AG04450 (cell line): ENCODE measurements at regions of chr1 and their contacts with region 1.

Region 1: DNA sequence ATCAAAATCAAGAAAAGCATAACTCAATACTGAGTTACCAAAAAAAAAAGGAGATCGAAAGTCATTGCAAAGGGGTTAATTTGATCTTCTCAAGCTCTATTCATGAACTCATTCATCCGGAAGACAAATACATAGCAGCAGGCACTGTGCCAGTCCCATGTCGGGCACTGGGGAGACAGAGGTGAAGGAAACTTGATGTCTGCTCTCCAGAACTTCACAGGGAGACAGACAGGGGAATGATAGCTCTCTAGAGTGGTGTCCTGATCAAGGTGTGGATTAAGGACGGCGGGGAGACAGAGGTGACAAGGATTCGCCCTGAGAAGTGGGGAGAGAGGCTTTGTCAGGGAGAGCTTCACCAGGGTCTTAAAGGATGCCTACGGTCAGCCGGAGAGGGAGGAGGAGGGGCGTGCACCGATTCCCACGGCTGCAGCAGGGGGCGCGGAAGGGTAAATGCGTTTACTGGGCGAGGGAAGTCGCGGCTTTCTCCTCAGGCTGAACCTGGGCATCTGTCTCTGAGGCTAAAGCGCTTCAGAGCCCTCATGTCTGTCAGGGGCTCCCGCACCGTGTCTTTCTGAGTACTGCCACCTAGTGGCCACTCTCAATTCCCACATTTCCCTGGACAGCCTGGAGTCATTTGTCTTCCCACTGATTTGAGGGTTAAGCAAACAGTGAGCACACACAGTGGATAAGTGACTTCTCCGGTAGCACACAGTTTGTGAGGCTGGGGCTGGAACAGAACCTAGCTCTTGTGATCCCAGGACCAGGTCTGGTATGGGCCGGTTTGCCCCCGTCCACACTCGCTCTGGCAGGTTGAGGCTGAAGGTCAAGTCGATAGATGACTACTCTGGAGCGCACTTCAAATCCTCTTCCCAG is 152.8 kb downstream of the TENT5C start:
- DNase-seq: peak; percentile 69
- H3K4me3 ChIP-seq: peak overlapping the region; percentile 51
- H3K27ac ChIP-seq: no peak overlapping the region
- H3K27me3 ChIP-seq: no peaks in the 10 kb centered on the region
- CTCF ChIP-seq: peak; percentile 87

Region 2: GRCh38 chr1:117527566-117528102 is 231.0 kb before region 1 on chr1:
- CTCF ChIA-PET with region 1: interaction called, 175 read pairs
- POLR2A ChIA-PET with region 1: no interaction called
- DNase-seq: peak; percentile 15
- H3K4me3 ChIP-seq: no peak overlapping the region
- H3K27ac ChIP-seq: no peak overlapping the region
- H3K27me3 ChIP-seq: no peaks in the 10 kb centered on the region
- CTCF ChIP-seq: no peak

Region 3: GRCh38 chr1:117695796-117696490 is 62.7 kb before region 1 on chr1:
- CTCF ChIA-PET with region 1: interaction called, 10 read pairs
- POLR2A ChIA-PET with region 1: no interaction called
- DNase-seq: peak; percentile 81
- H3K4me3 ChIP-seq: peak overlapping the region; percentile 34
- H3K27ac ChIP-seq: peak overlapping the region; percentile 98
- H3K27me3 ChIP-seq: no peaks in the 10 kb centered on the region
- CTCF ChIP-seq: no peak

Region 4: DNA sequence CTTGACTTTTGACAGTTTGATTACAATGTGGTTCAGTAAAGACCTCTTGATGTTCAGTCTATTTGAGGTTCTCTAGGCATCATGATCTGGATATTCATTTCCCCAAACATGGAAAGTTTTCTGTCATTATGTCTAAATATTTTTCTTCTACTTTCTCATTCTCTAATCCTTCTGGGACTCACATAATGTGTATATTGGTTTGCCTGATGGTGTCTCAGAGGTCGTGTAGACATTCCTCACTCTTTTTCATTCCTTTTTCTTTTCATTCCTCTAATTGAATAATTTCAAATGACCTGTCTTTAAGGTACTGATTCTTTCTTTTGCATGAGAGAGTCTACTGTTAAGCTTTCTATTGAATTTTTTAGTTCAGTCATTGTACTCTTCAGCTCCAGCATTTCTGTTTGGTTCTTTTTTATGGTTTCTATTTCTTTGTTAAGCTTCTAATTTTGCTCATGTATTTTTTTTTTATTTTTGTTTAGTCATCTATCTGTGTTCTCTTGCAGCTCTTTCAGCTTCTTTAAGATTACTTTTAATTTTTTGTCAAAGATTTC is 12.4 kb after region 1 on chr1:
- CTCF ChIA-PET with region 1: interaction called, 29 read pairs
- POLR2A ChIA-PET with region 1: no interaction called
- DNase-seq: no peak
- H3K4me3 ChIP-seq: no peak overlapping the region
- H3K27ac ChIP-seq: no peak overlapping the region
- H3K27me3 ChIP-seq: no peaks in the 10 kb centered on the region
- CTCF ChIP-seq: no peak

Region 5: DNA sequence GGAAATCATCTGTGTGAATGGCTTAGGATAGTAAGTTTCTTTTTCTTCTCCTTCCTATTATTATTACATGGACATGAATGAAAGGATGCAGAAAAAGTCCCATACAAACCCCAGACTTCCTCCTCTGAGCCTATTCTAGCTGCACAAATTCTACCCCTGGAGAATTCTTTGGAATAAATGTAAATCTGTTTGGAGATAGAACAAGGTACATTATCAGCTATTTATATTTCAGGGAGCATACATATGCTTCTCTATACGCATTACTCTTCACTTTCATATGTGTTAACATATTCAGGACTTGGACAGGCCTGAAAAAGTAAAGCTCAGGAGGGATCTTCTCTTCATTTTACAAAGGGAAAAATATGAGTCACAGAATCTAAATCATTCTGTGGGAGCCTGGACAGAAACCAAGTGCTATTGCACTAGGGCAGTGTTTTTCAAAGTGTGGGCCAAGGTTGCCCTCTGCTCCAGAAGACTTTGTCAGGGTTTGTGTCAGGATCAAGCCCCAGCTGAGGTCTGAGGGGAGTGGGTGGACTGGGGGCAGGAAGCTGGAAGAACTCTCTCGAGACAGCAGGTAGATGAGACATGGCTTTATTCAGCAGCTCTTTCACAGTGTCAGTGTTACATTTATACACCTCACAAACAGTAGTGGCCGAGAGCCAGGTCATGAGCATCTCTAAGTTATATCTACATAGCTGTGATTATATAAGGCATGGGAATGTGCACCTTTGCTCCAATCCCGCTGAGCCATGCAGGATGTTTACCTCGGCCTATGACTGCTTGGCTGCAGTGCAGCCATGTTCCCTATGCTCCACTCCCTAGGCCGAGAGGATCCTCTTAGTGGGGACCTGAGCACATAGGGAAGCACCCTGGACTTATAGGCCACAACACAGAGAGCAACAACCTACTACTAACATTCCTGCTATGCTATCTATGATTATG is 56.4 kb after region 1 on chr1:
- CTCF ChIA-PET with region 1: interaction called, 18 read pairs
- POLR2A ChIA-PET with region 1: no interaction called
- DNase-seq: no peak
- H3K4me3 ChIP-seq: no peak overlapping the region
- H3K27ac ChIP-seq: peak overlapping the region; percentile 65
- H3K27me3 ChIP-seq: no peaks in the 10 kb centered on the region
- CTCF ChIP-seq: no peak

Region 6: DNA sequence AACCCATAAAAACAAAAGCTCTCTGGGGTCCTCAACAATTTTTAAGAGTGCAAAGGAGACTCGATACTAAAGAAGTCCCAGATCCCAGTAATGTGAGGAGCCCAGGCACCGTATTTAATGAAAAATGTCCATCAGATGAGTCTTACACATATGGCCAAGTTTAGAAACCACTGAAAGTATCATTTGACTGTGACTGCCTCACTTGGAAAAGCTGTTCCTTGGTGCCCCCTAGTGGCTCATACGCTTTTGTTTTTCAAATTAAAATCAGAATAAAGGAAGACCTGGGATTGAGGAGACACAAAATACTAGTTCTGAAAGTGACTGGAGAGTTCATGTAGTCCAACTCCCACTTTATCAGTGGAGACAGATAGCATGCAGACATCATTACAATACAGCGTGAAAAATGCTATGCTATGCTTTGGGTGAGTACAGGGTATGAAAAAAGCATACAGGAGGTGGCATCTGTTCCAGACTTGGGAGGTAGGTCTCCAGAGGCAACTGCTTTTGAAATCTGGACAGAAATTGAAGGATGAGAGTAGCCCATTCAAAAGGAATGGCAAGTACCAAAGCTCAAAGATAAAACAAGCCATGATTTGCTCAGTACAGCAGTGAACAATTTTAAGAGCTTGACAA is 136.9 kb after region 1 on chr1:
- CTCF ChIA-PET with region 1: interaction called, 112 read pairs
- POLR2A ChIA-PET with region 1: interaction called, 3 read pairs
- DNase-seq: peak; percentile 85
- H3K4me3 ChIP-seq: no peak overlapping the region
- H3K27ac ChIP-seq: no peak overlapping the region
- H3K27me3 ChIP-seq: no peaks in the 10 kb centered on the region
- CTCF ChIP-seq: peak; percentile 79